ENCODE measurements at regions of chr14 and their contacts with region 1.

Region 1: DNA sequence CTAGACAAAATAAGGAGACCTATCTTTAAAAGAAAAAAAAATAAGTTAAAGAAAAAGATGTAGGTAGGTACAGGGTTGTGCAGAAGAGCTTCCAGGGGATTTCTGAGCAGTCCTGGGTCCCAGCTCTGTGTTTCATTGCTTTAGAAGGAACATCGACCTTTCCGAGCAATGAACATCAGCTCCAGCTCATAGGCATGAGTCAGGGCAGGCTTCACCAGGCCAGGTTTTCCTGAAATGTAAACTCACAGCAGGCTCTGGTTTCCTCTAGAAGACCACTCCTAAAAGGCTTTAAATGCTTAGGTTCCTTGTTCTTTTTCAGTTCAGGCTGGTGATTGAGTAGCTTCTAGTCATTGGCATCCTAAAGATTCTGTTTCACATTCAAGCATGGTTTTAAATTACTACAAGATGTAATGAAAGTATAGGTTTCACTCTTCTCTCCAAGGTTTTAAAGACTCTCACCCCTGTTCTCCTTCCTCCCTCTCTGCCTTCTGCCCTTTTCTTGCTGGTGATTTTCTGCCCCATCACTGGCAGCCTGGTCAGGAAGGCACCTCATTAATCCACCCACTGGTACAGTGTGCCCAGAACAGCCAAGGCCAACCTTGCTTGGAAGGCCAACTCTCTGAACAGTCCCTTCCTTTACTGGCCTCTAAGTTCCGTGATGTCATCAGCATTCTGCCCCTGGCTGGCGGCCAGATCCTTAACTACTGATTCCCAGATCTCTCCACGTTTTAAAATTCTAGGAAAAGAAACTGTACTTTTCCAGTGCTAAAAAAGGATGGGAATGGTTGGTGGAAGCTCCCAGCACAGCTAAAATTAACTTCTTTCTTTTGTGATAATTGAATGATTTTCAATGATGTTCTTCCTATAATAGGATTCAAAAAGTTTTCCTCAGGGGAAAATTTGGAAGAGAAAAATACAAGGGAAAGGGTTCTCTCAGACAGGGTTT is 109.4 kb upstream of the HIF1A start:
- DNase-seq: no peak
- H3K4me3 ChIP-seq: no peak overlapping the region
- H3K27ac ChIP-seq: peak overlapping the region; percentile 73
- H3K4me1 ChIP-seq: peaks cover 31% of the 10 kb centered on the region
- H3K27me3 ChIP-seq: no peaks in the 10 kb centered on the region
- CTCF ChIP-seq: no peak

Region 2: DNA sequence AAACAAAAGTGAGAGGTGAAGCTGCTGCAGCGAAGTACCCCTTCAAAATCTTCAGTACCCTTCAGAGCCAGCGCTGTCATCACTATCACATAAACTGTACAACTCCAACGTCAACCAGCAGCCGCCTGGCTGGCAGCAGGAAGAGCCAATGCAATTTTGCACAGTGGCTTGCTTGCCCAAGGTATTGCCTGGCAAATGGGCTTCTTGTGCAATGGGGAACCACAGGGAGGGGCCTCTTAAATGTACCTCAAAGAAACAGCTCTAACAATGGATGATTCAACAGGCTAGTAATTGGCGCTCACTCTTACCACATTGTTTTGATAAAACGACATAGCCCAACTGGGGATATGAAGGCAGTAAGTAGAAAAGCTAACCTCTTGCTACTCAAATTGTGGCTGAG is 16.1 kb before region 1 on chr14:
- CTCF ChIA-PET with region 1: interaction called, 3 read pairs
- dilution Hi-C with region 1: no loop called
- in situ Hi-C with region 1: no loop called
- intact Hi-C with region 1: loop called (anchors 1 kb)
- DNase-seq: peak; percentile 95
- H3K4me3 ChIP-seq: no peak overlapping the region
- H3K27ac ChIP-seq: peak overlapping the region; percentile 80
- H3K4me1 ChIP-seq: peaks cover 68% of the 10 kb centered on the region
- H3K27me3 ChIP-seq: no peaks in the 10 kb centered on the region
- CTCF ChIP-seq: no peak

Measured in mammary epithelial cell (primary cell).